ENCODE measurements at regions of chr10 and their contacts with region 1.

Region 1: DNA sequence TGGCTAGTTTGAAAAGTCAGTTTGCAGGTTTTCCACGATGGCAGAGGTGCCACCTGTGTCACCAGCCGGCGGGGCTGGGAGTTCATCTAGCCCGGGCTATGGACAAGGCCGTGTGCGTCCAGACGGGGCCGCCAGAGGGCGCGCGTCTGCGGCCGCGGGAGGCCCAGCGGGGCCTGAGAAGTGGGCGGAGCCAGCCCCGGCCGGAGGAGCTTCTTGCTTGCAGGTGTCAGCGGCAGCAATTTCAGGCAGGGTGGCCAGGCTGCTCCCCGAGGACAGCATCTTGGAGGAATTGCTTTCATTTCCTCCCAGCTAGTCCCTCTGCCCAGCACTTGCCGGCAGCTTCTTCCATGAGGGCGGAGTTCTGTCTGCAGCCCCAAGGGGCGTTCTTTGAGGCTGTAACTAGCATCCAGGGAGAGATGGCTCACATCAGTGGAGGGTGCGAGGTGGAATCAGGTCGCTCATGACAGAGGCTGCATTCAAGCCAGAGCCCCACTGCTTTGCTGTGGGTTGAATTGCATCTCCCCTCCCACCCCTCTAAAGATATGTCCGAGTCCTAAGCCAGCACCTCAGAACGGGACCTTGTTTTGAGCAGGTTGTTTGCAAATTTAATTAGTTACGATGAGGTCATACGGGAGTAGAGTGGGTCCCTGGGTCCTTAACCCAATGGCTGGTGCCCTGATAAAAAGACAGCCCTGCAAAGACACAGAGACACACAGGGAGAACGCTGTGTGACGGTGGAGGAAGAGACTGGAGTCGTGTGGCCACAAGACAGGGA is 85.9 kb upstream of the MKI67 start:
- DNase-seq: peak; percentile 91
- ATAC-seq: peak; percentile 90
- H3K4me3 Mint-ChIP-seq: peak overlapping the region; percentile 65
- H3K27ac Mint-ChIP-seq: peak overlapping the region; percentile 51
- H3K4me1 Mint-ChIP-seq: peaks cover 8% of the 10 kb centered on the region
- H3K27me3 Mint-ChIP-seq: no peaks in the 10 kb centered on the region

Region 2: DNA sequence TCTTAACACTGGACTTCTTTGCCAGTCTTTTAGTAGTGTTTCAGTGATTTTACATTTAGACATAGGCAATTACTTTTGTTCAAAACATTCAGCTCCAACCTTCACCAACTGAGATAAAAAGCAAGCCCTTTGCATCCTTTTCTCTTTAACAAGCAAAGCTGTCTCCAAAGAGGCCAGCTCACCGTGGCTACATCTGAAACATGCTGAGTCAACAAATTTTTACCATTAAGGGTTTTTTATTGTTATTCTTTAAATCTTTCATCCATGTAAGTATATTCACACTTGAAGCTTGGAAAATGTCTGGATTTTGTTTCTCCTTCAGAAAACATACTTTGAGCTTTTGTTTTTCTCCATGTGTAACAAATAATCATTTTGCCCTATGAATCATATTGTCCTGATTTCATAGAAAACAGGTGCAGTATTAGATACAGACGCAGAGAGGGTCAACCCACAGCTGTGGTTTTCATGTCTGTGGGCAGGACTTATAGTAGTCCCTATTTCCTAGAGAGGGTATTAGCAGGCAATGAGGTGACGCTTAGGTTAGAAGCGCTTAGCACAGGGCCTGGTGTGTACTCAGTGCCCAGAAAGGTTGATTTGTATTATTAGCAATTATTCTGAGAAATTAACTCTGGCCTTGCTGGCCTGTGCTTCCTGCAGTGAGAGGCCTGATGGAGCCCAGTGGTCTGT is 185.4 kb before region 1 on chr10:
- CTCF ChIA-PET with region 1: no interaction called
- POLR2A ChIA-PET with region 1: no interaction called
- intact Hi-C with region 1: no loop called
- DNase-seq: peak; percentile 65
- ATAC-seq: peak; percentile 85
- H3K4me3 Mint-ChIP-seq: no peak overlapping the region
- H3K27ac Mint-ChIP-seq: peak overlapping the region; percentile 47
- H3K4me1 Mint-ChIP-seq: peaks cover 20% of the 10 kb centered on the region
- H3K27me3 Mint-ChIP-seq: no peaks in the 10 kb centered on the region

Region 3: DNA sequence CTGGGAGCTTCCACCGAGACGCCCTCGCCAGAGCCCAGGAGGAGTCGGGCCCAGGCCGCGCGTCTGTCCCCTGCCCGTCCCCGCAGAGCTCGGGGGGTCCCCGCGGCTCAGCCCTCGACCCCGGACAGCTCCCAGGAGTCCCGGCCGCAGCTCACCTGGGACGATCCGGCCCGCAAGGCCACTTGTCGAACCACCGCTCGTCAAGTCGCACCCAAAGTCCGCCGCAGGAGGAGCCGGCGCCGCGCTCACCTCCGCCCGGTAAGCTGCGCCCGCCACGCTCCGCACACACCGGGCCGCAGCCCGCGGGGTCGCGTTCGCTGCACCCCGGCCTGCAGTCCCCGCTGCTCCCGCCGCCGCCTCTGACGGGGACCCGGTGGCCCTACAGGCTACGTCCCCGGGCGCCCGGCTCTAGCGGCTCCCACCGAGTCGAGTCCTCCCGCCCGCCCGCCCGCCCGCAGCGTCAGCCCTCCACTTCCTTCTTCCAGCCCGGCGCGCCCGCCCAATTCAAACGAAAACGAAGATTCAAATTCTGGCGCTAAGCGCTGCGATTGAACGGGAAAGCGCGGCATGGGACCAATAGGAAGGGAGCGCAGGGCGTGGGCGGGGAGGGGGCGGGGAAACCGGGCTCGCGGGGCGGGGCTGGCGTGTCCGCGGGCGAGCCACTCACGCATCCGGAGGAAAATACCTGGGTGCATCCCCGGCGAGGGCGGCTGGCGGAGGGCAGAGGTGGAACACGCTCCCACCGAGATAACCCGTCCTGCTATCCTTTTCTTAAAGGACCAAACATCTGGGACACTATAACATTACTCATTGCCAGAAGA is 86.0 kb before region 1 on chr10 and contains the start of gene MKI67:
- CTCF ChIA-PET with region 1: interaction called, 3 read pairs
- POLR2A ChIA-PET with region 1: no interaction called
- intact Hi-C with region 1: loop called (anchors 1 to 5 kb)
- DNase-seq: peak; percentile 96
- ATAC-seq: peak; percentile 93
- H3K4me3 Mint-ChIP-seq: peak within 1 kb of the TSS; percentile 93
- H3K27ac Mint-ChIP-seq: peak within 1 kb of the TSS; percentile 90
- H3K4me1 Mint-ChIP-seq: peaks cover 27% of the 10 kb centered on the region
- H3K27me3 Mint-ChIP-seq: peaks cover 13% of the 10 kb centered on the region
- total RNA-seq, gene MKI67: 234 to 244 TPM

Region 4: GRCh38 chr10:128150045-128150493 is 62.1 kb before region 1 on chr10:
- CTCF ChIA-PET with region 1: interaction called, 4 read pairs
- POLR2A ChIA-PET with region 1: no interaction called
- intact Hi-C with region 1: loop called in 1 of 2 experiments (anchors 1 kb)
- DNase-seq: peak; percentile 89
- ATAC-seq: peak; percentile 96
- H3K4me3 Mint-ChIP-seq: peak overlapping the region; percentile 60
- H3K27ac Mint-ChIP-seq: no peak overlapping the region
- H3K4me1 Mint-ChIP-seq: peaks cover 21% of the 10 kb centered on the region
- H3K27me3 Mint-ChIP-seq: no peaks in the 10 kb centered on the region

Region 5: GRCh38 chr10:128178319-128178958 is 33.7 kb before region 1 on chr10:
- CTCF ChIA-PET with region 1: interaction called, 30 read pairs
- POLR2A ChIA-PET with region 1: no interaction called
- intact Hi-C with region 1: loop called in 1 of 2 experiments (anchors 1 kb)
- DNase-seq: peak; percentile 73
- ATAC-seq: peak; percentile 69
- H3K4me3 Mint-ChIP-seq: no peak overlapping the region
- H3K27ac Mint-ChIP-seq: no peak overlapping the region
- H3K4me1 Mint-ChIP-seq: peaks cover 20% of the 10 kb centered on the region
- H3K27me3 Mint-ChIP-seq: no peaks in the 10 kb centered on the region

Region 6: DNA sequence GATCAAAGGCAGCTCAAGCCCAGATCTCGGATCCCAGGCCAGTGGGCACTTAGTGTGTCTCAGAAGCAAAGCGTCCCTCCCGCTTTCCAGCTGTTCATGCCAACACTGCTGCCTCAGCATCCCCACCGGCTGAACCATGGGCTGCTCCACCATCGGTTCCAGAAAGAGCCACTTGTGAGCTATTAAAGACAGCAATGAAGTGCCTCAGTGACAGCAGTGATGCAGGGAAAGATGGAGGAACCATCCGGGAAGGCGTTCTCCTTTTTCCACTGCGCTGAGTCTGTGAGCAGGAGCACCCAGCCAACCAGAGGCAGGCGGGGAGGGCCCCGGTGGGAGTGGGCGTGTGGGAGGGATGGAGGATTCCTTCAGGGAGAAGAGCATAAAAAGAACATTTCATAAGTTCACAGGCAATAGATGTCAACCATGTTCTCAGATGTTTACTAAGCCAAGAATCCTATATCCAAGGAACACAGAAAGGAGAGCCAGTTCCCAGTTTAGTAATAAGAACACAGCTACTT is 10.3 kb after region 1 on chr10:
- CTCF ChIA-PET with region 1: interaction called, 10 read pairs
- POLR2A ChIA-PET with region 1: no interaction called
- intact Hi-C with region 1: no loop called
- DNase-seq: no peak
- ATAC-seq: no peak
- H3K4me3 Mint-ChIP-seq: no peak overlapping the region
- H3K27ac Mint-ChIP-seq: no peak overlapping the region
- H3K4me1 Mint-ChIP-seq: peaks cover 9% of the 10 kb centered on the region
- H3K27me3 Mint-ChIP-seq: peaks cover 13% of the 10 kb centered on the region

Region 7: DNA sequence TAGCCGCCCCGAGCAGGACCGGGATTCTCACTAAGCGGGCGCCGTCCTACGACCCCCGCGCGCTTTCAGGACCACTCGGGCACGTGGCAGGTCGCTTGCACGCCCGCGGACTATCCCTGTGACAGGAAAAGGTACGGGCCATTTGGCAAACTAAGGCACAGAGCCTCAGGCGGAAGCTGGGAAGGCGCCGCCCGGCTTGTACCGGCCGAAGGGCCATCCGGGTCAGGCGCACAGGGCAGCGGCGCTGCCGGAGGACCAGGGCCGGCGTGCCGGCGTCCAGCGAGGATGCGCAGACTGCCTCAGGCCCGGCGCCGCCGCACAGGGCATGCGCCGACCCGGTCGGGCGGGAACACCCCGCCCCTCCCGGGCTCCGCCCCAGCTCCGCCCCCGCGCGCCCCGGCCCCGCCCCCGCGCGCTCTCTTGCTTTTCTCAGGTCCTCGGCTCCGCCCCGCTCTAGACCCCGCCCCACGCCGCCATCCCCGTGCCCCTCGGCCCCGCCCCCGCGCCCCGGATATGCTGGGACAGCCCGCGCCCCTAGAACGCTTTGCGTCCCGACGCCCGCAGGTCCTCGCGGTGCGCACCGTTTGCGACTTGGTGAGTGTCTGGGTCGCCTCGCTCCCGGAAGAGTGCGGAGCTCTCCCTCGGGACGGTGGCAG is 1254.7 kb after region 1 on chr10 and contains the start of gene MGMT:
- CTCF ChIA-PET with region 1: no interaction called
- POLR2A ChIA-PET with region 1: no interaction called
- intact Hi-C with region 1: loop called in 1 of 2 experiments (anchors 5 kb)
- DNase-seq: peak; percentile 99
- ATAC-seq: peak; percentile 98
- H3K4me3 Mint-ChIP-seq: peak within 1 kb of the TSS; percentile 77
- H3K27ac Mint-ChIP-seq: peak within 1 kb of the TSS; percentile 42
- H3K4me1 Mint-ChIP-seq: peaks cover 7% of the 10 kb centered on the region
- H3K27me3 Mint-ChIP-seq: no peaks in the 10 kb centered on the region
- total RNA-seq, gene MGMT: 18.0 to 22.8 TPM

Measured in activated CD4-positive, alpha-beta T cell treated with anti-CD3 and anti-CD28 coated beads for 36 hours (primary cell).